OCI-LY7 (cell line): ENCODE measurements at regions of chr2 and their contacts with region 1.

Region 1: DNA sequence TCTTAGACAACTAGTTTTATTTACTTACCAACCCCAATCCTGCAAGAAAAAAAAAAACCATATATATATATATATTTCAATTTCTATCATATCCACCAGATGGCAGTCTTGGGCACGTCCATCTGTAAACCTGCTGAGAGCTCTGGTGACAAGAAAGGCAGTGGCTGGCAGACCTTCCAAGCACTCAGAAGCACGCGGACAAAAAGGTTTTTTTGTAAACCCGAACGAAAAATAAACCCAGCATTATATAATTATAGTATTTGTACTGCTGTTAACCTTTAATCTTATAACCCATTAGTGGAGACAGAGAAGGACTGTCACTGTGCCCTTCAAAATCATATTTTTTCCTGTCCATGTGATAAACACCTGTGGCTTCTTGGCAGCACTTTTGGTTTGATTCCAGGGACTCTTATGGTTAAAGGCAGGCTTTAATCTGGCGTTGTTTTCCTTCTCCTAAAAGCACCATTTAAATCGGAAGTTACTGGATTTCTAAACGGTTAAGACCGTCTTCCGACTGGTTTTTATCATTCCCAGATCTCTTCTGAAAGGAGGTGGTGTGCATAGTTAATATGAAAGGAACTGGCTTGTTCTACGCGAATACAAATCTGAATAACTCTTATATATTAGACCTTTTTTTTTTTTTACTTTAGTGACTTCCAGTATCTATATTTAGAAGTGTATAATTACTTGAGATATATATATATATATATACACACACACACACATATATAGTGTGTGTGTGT is 31.0 kb upstream of the SLC3A1 start:
- DNase-seq: peak; percentile 79
- H3K4me3 ChIP-seq: peak overlapping the region; percentile 23
- H3K27ac ChIP-seq: no peak overlapping the region
- H3K4me1 ChIP-seq: peaks cover 4% of the 10 kb centered on the region
- CTCF ChIP-seq: peak; percentile 83

Region 2: GRCh38 chr2:44009135-44009735 is 235.1 kb before region 1 on chr2:
- CTCF ChIA-PET with region 1: no interaction called
- POLR2A ChIA-PET with region 1: no interaction called
- intact Hi-C with region 1: no loop called
- DNase-seq: no peak
- H3K4me3 ChIP-seq: no peak overlapping the region
- H3K27ac ChIP-seq: no peak overlapping the region
- H3K4me1 ChIP-seq: peaks cover 12% of the 10 kb centered on the region
- CTCF ChIP-seq: peak; percentile 33; the same call in 1 of the 2 replicates

Region 3: GRCh38 chr2:44155666-44156446 is 88.4 kb before region 1 on chr2:
- CTCF ChIA-PET with region 1: no interaction called
- POLR2A ChIA-PET with region 1: no interaction called
- intact Hi-C with region 1: no loop called
- DNase-seq: no peak
- H3K4me3 ChIP-seq: no peak overlapping the region
- H3K27ac ChIP-seq: no peak overlapping the region
- H3K4me1 ChIP-seq: no peaks in the 10 kb centered on the region
- CTCF ChIP-seq: no peak

Region 4: GRCh38 chr2:44233450-44234128 is 10.7 kb before region 1 on chr2:
- CTCF ChIA-PET with region 1: no interaction called
- POLR2A ChIA-PET with region 1: no interaction called
- intact Hi-C with region 1: no loop called
- DNase-seq: no peak
- H3K4me3 ChIP-seq: no peak overlapping the region
- H3K27ac ChIP-seq: no peak overlapping the region
- H3K4me1 ChIP-seq: peaks cover 18% of the 10 kb centered on the region
- CTCF ChIP-seq: no peak

Region 5: DNA sequence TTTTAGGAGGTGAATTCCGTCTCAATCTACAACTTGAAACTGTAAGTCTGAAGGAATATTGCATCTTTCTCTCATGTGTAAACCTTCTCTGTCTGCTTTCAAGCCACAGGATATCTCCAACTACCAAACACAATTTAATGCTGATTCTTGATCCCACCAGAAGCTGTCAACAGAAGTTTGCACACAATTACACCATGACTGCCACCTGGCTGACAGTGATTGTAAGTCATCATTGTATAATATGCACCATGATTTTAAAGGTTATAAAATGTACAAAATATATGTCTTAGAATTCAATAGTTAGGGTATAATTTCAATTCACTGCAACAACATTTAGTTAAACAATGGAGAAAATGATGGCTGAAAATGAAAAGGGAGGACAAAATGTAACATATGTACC is 98.6 kb after region 1 on chr2:
- CTCF ChIA-PET with region 1: no interaction called
- POLR2A ChIA-PET with region 1: no interaction called
- intact Hi-C with region 1: loop called (anchors 5 kb)
- DNase-seq: peak; percentile 44
- H3K4me3 ChIP-seq: no peak overlapping the region
- H3K27ac ChIP-seq: no peak overlapping the region
- H3K4me1 ChIP-seq: no peaks in the 10 kb centered on the region
- CTCF ChIP-seq: peak; percentile 77